CD8-positive, alpha-beta memory T cell (primary cell): ENCODE measurements at regions of chr3 and their contacts with region 1.

Region 1: GRCh38 chr3:130892759-130893375 is 1.0 kb upstream of the ATP2C1 start:
- DNase-seq: peak; percentile 35 to 76 (median 68)
- H3K4me3 ChIP-seq: peak overlapping the region; percentile 71
- H3K4me3 Mint-ChIP-seq: peak overlapping the region; percentile 96 to 99 (median 98)
- H3K27ac ChIP-seq: peak overlapping the region; percentile 96
- H3K27ac Mint-ChIP-seq: peak overlapping the region; percentile 99 to 100 (median 100)
- H3K4me1 ChIP-seq: peaks cover 26% of the 10 kb centered on the region
- H3K4me1 Mint-ChIP-seq: peaks cover 36 to 44% (median 38%) of the 10 kb centered on the region in 3 donors
- H3K27me3 ChIP-seq: no peaks in the 10 kb centered on the region
- H3K27me3 Mint-ChIP-seq: no peaks in the 10 kb centered on the region

Region 2: GRCh38 chr3:130746246-130747039 is 146.4 kb before region 1 on chr3 and contains the start of gene PIK3R4:
- CTCF ChIA-PET with region 1: interaction called, 9 read pairs
- POLR2A ChIA-PET with region 1: interaction called, 24 read pairs
- DNase-seq: peak; percentile 89 to 97 (median 94)
- H3K4me3 ChIP-seq: peak within 1 kb of the TSS; percentile 82
- H3K4me3 Mint-ChIP-seq: peak within 1 kb of the TSS in 6 of 7 donors; percentile 89 to 90 (median 89)
- H3K27ac ChIP-seq: peak within 1 kb of the TSS; percentile 91
- H3K27ac Mint-ChIP-seq: peak within 1 kb of the TSS in 7 of 8 donors; percentile 93 to 99 (median 98)
- H3K4me1 ChIP-seq: peaks cover 44% of the 10 kb centered on the region
- H3K4me1 Mint-ChIP-seq: peaks cover 48 to 53% (median 51%) of the 10 kb centered on the region in 3 donors
- H3K27me3 ChIP-seq: no peaks in the 10 kb centered on the region
- H3K27me3 Mint-ChIP-seq: peaks cover 0 to 9% of the 10 kb centered on the region in 2 donors
- total RNA-seq, gene PIK3R4: 32.0 to 34.8 TPM

Region 3: DNA sequence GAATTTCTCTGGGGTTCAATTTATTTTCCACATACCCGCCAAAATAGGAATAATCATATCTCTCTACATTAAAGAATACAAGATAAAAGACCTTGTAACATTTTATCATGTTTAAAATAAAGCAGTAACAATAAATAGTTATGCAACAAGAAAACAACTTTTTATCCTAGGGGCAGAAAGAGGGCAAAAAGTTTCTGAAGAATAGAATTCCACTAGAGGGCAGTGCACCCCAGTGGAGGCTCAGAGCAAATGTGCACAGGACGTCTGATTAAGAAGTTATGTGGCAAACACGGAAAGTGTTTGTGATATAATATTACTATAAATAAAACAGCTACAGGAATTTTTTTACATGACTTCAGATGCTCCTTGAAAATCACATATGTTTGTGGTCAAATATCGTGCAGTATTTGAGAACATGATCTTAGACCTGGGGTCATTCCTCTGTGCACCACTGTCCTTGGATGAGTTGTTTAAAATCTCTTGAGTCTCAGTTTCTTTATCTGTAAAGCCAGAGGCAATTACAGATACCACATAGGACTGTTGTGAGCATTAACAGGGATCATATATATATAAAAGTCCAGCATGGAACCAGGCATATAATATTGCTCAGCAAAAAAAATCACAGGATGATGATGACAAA is 133.0 kb before region 1 on chr3:
- CTCF ChIA-PET with region 1: interaction called, 28 read pairs
- POLR2A ChIA-PET with region 1: no interaction called
- DNase-seq: peak; percentile 19 to 63 (median 41)
- H3K4me3 ChIP-seq: no peak overlapping the region
- H3K4me3 Mint-ChIP-seq: no peak overlapping the region
- H3K27ac ChIP-seq: no peak overlapping the region
- H3K27ac Mint-ChIP-seq: peak overlapping the region in 1 of 8 donors; percentile 66
- H3K4me1 ChIP-seq: no peaks in the 10 kb centered on the region
- H3K4me1 Mint-ChIP-seq: no peaks in the 10 kb centered on the region
- H3K27me3 ChIP-seq: no peaks in the 10 kb centered on the region
- H3K27me3 Mint-ChIP-seq: peaks cover 5 to 26% of the 10 kb centered on the region in 2 donors

Region 4: GRCh38 chr3:131026321-131027178 is 133.7 kb after region 1 on chr3 and contains the starts of genes ASTE1 and NEK11:
- CTCF ChIA-PET with region 1: interaction called, 11 read pairs
- POLR2A ChIA-PET with region 1: interaction called, 8 read pairs
- DNase-seq: peak; percentile 88 to 96 (median 93)
- H3K4me3 ChIP-seq: peak within 1 kb of the TSS; percentile 93
- H3K4me3 Mint-ChIP-seq: peak within 1 kb of the TSS; percentile 92 to 96 (median 94)
- H3K27ac ChIP-seq: peak within 1 kb of the TSS; percentile 96
- H3K27ac Mint-ChIP-seq: peak within 1 kb of the TSS; percentile 97 to 99 (median 98)
- H3K4me1 ChIP-seq: peaks cover 49% of the 10 kb centered on the region
- H3K4me1 Mint-ChIP-seq: peaks cover 54 to 59% (median 58%) of the 10 kb centered on the region in 3 donors
- H3K27me3 ChIP-seq: no peaks in the 10 kb centered on the region
- H3K27me3 Mint-ChIP-seq: no peaks in the 10 kb centered on the region
- total RNA-seq, gene ASTE1: 11.9 to 13.7 TPM
- total RNA-seq, gene NEK11: 2.4 to 2.8 TPM